Tibial artery (tissue), 4 donors: ENCODE measurements at regions of chr5 and their contacts with region 1.

Region 1: DNA sequence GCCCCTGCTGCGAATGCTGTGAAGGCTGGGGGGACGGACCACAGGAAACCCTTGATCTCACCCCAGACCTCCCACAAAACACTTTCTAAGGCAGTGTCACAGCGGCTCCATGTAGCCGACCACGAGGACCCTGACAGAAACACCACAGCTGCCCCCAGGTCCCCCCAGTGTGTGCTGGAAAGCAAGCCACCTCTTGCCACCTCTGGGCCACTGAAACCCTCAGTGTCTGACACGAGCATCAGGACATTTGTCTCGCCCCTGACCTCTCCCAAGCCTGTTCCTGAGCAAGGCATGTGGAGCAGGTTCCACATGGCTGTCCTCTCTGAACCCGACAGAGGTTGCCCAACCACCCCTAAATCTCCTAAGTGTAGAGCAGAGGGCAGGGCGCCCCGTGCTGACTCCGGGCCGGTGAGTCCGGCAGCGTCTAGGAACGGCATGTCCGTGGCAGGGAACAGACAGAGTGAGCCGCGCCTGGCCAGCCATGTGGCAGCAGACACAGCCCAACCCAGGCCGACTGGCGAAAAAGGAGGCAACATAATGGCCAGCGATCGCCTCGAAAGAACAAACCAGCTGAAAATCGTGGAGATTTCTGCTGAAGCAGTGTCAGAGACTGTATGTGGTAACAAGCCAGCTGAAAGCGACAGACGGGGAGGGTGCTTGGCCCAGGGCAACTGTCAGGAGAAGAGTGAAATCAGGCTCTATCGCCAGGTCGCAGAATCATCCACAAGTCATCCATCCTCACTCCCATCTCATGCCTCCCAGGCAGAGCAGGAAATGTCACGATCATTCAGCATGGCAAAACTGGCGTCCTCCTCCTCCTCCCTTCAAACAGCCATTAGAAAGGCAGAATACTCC is 84.7 kb downstream of the GOLPH3 start:
- DNase-seq: no peak
- H3K4me3 ChIP-seq: no peak overlapping the region
- H3K27ac ChIP-seq: no peak overlapping the region
- H3K4me1 ChIP-seq: peaks cover 0 to 9% (median 2%) of the 10 kb centered on the region in 4 donors
- H3K27me3 ChIP-seq: no peaks in the 10 kb centered on the region
- CTCF ChIP-seq: no peak

Region 2: DNA sequence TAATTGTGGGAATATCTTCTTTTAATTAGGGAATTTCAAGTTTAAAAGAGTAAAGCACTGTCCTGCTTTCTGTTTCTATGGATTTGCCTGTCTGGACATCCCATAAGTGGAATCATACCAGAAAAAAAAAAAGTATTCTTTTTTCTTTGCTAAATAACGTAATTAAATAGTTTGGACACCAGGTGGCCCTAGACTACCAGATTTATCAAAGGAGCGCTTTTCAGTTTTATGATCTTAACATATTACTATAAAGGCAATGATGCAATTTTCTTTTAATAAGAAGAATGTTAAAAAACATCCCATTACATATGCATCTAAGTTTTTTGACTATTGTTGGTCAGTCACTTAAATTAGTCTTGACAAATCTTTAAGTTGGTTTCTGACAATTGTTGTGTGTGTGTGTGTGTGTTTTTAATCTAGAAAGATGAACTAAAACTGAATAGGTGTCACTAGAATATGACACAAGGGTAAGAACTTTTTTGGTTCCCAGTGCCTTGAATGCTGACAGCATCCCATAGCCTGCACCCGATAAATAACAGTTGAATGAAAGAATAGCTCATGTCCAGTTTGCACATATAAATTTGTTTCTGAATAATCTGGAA is 507.8 kb before region 1 on chr5:
- intact Hi-C with region 1: loop called (anchors 5 kb)
- DNase-seq: no peak
- H3K4me3 ChIP-seq: no peak overlapping the region
- H3K27ac ChIP-seq: no peak overlapping the region
- H3K4me1 ChIP-seq: no peaks in the 10 kb centered on the region
- H3K27me3 ChIP-seq: no peaks in the 10 kb centered on the region
- CTCF ChIP-seq: peak; percentile 54 to 72

Region 3: DNA sequence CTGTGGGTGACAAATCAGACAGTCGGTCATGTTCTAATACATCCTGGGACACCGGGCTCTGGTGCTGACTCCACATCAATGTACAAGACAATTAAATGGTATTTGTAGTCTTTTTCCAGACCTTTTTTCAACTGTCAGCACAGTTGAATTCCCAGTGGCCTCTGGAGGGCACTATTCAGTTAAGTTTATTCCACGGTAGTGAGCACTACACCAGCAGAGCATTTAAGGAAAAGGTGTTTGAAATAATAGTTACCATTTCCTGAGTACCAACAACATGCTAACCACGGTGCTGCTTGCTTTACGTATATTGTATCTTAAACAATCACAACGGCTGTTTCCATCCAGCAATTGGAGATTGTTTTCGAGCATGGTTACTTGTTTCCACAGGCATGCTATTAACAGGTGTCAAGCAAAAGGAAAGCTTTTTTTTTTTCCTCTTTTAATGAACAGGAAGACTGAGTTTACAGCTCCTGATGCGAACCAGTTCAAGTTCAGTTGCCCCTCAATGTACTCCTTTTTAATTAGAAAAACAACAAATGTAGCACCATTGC is 263.8 kb before region 1 on chr5:
- intact Hi-C with region 1: loop called (anchors 5 kb)
- DNase-seq: peak in 1 of 2 donors; percentile 46
- H3K4me3 ChIP-seq: no peak overlapping the region
- H3K27ac ChIP-seq: no peak overlapping the region
- H3K4me1 ChIP-seq: no peaks in the 10 kb centered on the region
- H3K27me3 ChIP-seq: no peaks in the 10 kb centered on the region
- CTCF ChIP-seq: peak; percentile 66 to 75